ENCODE measurements at regions of chr17 and their contacts with region 1.

Region 1: DNA sequence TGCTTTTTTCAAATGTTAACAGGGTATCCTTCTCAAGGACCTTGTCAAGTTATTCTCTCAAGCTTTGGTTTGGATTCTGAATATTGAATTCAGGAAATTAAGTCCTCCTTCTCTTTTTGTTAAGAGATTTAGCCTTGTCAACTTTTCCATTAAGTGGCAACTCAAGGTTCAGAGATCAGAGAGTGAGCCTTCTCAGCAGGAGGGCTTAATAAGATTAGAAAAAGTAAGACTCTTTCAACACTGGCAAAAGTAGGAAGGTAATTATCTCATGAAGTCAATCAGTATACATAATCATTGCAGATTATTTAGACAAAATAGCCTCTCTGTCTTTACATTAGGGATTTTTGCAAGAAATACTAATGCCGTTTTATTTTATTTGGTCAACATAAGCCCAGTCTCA is 330.7 kb downstream of the KIF2B start:
- DNase-seq: no peak
- H3K4me3 ChIP-seq: no peak overlapping the region
- CTCF ChIP-seq: no peak
- POLR2A ChIP-seq: no peak

Region 2: GRCh38 chr17:53176629-53177028 is 976.8 kb before region 1 on chr17:
- intact Hi-C with region 1: loop called (anchors 10 kb)
- DNase-seq: no peak
- H3K4me3 ChIP-seq: no peak overlapping the region
- CTCF ChIP-seq: no peak
- POLR2A ChIP-seq: no peak

Measured in lower leg skin (tissue), 4 donors.